Sigmoid colon (tissue), 7 donors: ENCODE measurements at regions of chr20 and their contacts with region 1.

Region 1: GRCh38 chr20:1225783-1226654 is at the start of gene RAD21L1:
- DNase-seq: peak; percentile 83
- H3K4me3 ChIP-seq: peak within 1 kb of the TSS; percentile 36 to 63 (median 52)
- H3K27ac ChIP-seq: peak within 1 kb of the TSS in 3 of 4 donors; percentile 27 to 65 (median 32)
- H3K4me1 ChIP-seq: peaks cover 0 to 19% (median 14%) of the 10 kb centered on the region in 4 donors
- H3K27me3 ChIP-seq: peaks cover 9 to 50% (median 35%) of the 10 kb centered on the region in 3 donors
- CTCF ChIP-seq: no peak
- EP300 ChIP-seq: no peak
- POLR2A ChIP-seq: no peak
- total RNA-seq, gene RAD21L1: not detected

Region 2: DNA sequence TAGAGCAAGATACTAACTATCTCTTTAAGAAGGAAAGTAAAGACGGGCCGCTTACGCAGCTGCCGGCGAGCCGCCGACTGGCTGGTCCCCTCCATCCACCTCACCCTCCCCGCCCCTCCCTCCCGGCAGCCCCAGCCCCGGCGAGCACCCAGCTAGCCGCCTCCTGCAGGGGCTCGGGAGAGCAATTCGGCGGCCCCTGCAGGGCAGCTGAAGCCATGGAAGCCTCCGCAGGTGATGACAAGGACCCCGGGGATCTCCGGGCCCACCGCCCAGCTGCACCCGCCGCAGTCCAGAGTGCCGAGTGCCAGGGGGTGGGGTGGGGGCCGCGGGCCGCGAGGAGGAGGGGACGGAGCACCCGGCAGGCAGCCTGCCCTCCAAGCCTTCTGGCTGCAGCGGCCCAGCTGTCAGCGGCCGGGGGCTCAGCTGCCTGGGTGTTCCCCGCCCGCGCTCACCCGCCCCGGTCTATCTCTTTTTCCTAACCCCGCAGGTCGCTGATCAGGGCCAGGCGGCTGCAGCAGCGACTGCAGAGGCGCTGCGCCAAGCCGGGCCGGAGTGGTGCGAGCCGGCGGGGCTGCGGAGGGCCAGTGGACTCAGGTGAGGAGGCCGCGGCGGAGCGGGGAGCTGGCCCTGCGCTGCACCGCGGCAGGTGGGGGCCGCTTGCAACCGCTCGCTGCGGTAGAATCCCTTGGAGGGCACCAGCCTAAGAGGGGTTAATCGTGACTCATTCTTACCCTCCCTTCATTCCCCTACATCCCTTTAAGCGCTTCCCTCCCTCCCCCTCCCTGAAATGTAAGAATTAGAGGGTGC is 40.4 kb after region 1 on chr20 and contains the start of gene SNPH:
- intact Hi-C with region 1: loop called (anchors 2 kb)
- DNase-seq: peak; percentile 91
- H3K4me3 ChIP-seq: peak within 1 kb of the TSS; percentile 76 to 91 (median 88)
- H3K27ac ChIP-seq: peak within 1 kb of the TSS; percentile 73 to 87 (median 78)
- H3K4me1 ChIP-seq: peaks cover 0 to 22% (median 17%) of the 10 kb centered on the region in 4 donors
- H3K27me3 ChIP-seq: no peaks in the 10 kb centered on the region
- CTCF ChIP-seq: no peak
- EP300 ChIP-seq: no peak
- POLR2A ChIP-seq: no peak
- total RNA-seq, gene SNPH: 6.4 to 21.0 (median 8.9) TPM